HCT116 (cell line): ENCODE measurements at regions of chr6 and their contacts with region 1.

Region 1: GRCh38 chr6:153231048-153231646 is 100.1 kb upstream of the RGS17 start:
- DNase-seq: peak; percentile 52
- ATAC-seq: peak; percentile 91
- H3K4me3 ChIP-seq: no peak overlapping the region
- H3K27ac ChIP-seq: no peak overlapping the region
- H3K4me1 ChIP-seq: no peaks in the 10 kb centered on the region
- H3K27me3 ChIP-seq: no peaks in the 10 kb centered on the region
- CTCF ChIP-seq: peak; percentile 89 to 98 (median 98)
- POLR2A ChIP-seq: no peak
- RAD21 ChIP-seq: peak; percentile 97

Region 2: GRCh38 chr6:152696522-152696921 is 534.6 kb before region 1 on chr6:
- CTCF ChIA-PET with region 1: no interaction called
- POLR2A ChIA-PET with region 1: no interaction called
- RAD21 ChIA-PET with region 1: no interaction called
- intact Hi-C with region 1: no loop called
- DNase-seq: no peak
- ATAC-seq: no peak
- H3K4me3 ChIP-seq: no peak overlapping the region
- H3K27ac ChIP-seq: no peak overlapping the region
- H3K4me1 ChIP-seq: no peaks in the 10 kb centered on the region
- H3K27me3 ChIP-seq: no peaks in the 10 kb centered on the region
- CTCF ChIP-seq: no peak
- POLR2A ChIP-seq: no peak
- RAD21 ChIP-seq: no peak

Region 3: GRCh38 chr6:153312641-153313040 is 81.5 kb after region 1 on chr6:
- CTCF ChIA-PET with region 1: interaction called, 16 read pairs
- POLR2A ChIA-PET with region 1: no interaction called
- RAD21 ChIA-PET with region 1: no interaction called
- intact Hi-C with region 1: loop called (anchors 1 kb)
- DNase-seq: peak; percentile 49
- ATAC-seq: peak; percentile 81
- H3K4me3 ChIP-seq: no peak overlapping the region
- H3K27ac ChIP-seq: no peak overlapping the region
- H3K4me1 ChIP-seq: no peaks in the 10 kb centered on the region
- H3K27me3 ChIP-seq: peaks cover 56% of the 10 kb centered on the region
- CTCF ChIP-seq: peak; percentile 56 to 76 (median 68); a peak in 5 of 6 replicates
- POLR2A ChIP-seq: no peak
- RAD21 ChIP-seq: peak; percentile 86

Region 4: DNA sequence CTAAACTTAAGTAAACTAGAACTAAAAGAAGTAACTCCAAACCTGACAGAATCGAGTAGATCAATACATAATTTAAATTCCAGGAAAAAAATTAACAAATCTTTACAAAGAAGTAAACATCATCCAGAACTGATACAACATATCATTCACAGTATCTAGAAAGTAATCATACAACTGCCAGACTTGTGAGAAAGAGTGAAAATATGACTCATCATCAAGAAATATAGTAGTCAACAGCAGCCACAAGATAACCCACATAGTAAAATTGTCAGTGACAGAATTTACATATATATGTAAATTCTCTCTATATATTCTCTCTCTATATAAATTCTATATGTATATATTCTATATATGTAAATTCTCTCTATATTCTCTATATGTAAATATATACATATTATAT is 142.7 kb after region 1 on chr6:
- CTCF ChIA-PET with region 1: no interaction called
- POLR2A ChIA-PET with region 1: no interaction called
- RAD21 ChIA-PET with region 1: no interaction called
- intact Hi-C with region 1: no loop called
- DNase-seq: no peak
- ATAC-seq: no peak
- H3K4me3 ChIP-seq: no peak overlapping the region
- H3K27ac ChIP-seq: no peak overlapping the region
- H3K4me1 ChIP-seq: no peaks in the 10 kb centered on the region
- H3K27me3 ChIP-seq: peaks cover 4% of the 10 kb centered on the region; the same call in 1 of the 2 replicates
- CTCF ChIP-seq: no peak
- POLR2A ChIP-seq: no peak
- RAD21 ChIP-seq: no peak

Region 5: GRCh38 chr6:153401754-153402153 is 170.6 kb after region 1 on chr6:
- CTCF ChIA-PET with region 1: no interaction called
- POLR2A ChIA-PET with region 1: no interaction called
- RAD21 ChIA-PET with region 1: no interaction called
- intact Hi-C with region 1: no loop called
- DNase-seq: no peak
- ATAC-seq: no peak
- H3K4me3 ChIP-seq: no peak overlapping the region
- H3K27ac ChIP-seq: no peak overlapping the region
- H3K4me1 ChIP-seq: no peaks in the 10 kb centered on the region
- H3K27me3 ChIP-seq: peaks cover 35% of the 10 kb centered on the region; the same call in 1 of the 2 replicates
- CTCF ChIP-seq: no peak
- POLR2A ChIP-seq: no peak
- RAD21 ChIP-seq: no peak

Region 6: DNA sequence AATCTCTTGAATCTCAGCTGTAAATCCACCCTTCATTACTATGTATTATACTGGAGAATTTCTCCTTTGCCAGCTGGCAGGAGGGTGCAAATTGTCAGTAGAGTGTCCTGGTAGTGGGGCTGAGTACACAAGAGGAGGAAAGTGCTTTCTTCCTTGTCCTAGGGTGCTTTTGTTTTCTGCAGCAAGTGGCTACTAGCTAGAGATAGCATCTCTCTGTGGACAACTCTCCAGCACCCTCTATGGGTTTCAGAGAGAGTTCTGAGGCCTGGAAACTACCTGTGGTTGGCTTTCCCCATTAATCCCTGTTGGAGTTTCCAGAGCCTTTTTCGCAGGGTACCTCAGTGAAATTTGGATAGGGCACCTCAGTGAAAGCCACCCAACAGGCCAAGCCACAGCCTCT is 322.5 kb after region 1 on chr6:
- CTCF ChIA-PET with region 1: interaction called, 11 read pairs
- POLR2A ChIA-PET with region 1: no interaction called
- RAD21 ChIA-PET with region 1: no interaction called
- intact Hi-C with region 1: loop called (anchors 1 kb)
- DNase-seq: peak; percentile 7
- ATAC-seq: peak; percentile 82
- H3K4me3 ChIP-seq: no peak overlapping the region
- H3K27ac ChIP-seq: no peak overlapping the region
- H3K4me1 ChIP-seq: no peaks in the 10 kb centered on the region
- H3K27me3 ChIP-seq: no peaks in the 10 kb centered on the region
- CTCF ChIP-seq: peak in 2 of 3 experiments; percentile 50 to 64; a peak in 4 of 6 replicates
- POLR2A ChIP-seq: no peak
- RAD21 ChIP-seq: peak; percentile 55

Region 7: DNA sequence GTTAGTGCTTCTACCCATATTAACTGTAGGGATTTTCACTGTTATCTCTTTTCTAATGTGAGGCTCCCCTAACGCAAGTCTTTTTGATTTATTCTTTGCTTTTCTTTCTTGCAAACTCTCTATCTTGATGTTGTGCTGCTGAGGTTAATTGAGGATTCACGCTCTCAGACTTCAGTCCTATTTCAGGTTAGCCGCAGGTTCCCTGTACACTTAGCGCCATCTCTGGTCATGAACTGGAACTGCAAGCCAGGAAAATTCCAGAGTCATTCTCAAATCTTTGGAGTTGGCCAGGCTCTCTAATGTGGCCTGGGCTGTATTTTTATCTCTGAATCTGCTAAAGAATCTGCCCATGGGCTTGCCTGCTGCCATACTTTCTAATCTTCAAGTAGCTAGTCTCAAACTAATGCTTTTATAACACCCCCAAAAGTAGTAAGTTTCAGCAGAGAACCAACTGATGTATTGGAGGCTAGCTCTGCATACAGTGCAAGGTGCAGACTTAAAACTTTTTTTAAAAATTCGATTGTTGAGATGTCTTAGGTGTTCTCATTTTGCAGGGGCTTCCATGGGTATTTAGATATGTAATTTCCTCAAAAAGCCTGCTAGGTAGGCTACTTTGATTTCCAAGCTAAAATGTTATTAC is 716.8 kb after region 1 on chr6:
- CTCF ChIA-PET with region 1: interaction called, 19 read pairs
- POLR2A ChIA-PET with region 1: no interaction called
- RAD21 ChIA-PET with region 1: no interaction called
- intact Hi-C with region 1: loop called (anchors 1 kb)
- DNase-seq: peak; percentile 21
- ATAC-seq: peak; percentile 82
- H3K4me3 ChIP-seq: no peak overlapping the region
- H3K27ac ChIP-seq: no peak overlapping the region
- H3K4me1 ChIP-seq: no peaks in the 10 kb centered on the region
- H3K27me3 ChIP-seq: peaks cover 27% of the 10 kb centered on the region
- CTCF ChIP-seq: peak; percentile 48 to 98 (median 96); a peak in 5 of 6 replicates
- POLR2A ChIP-seq: no peak
- RAD21 ChIP-seq: peak; percentile 75